CD4-positive, alpha-beta T cell (primary cell): ENCODE measurements at regions of chr20 and their contacts with region 1.

Region 1: DNA sequence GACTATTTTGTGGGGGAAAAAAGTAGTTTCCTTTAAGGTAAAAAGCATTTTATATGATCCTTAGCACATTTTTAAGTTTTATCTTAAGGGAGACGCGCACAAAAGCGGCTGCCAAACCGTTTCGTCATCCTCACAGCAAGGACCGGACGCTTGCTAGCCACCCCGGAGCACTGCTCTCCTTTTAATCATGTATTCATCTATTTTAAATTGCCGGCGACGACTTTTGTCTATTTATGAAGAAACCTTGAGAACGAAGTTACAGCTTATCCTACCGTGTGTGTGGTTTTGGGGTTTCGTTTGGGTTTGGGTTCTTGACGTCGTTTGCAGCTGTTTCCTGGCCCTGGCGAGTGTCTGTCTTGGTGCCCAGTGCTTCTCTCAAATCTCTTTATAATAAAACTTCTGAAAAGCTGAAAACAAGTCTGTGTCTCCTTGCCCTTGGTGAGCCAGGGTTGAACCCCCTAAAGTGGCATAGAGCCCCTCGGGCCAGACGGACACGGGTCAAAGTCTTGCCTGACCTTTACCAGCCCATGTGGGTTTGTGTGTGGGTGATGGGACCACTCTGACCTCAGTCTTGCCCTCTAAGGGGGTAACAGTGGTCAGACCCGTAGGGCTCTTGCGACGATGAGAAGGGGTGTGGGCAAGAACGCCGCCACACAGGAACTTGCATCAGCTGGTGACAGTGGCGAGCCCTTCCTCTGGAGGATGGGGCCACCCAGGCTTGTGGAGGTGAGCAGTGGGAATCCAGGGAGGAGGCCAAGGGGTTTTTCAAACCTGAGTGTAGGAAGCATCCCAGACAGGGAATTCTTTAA is 117.6 kb downstream of the JPH2 start:
- DNase-seq: peak; percentile 60 to 93 (median 70)
- ATAC-seq: peak; percentile 62
- H3K4me3 ChIP-seq: peak overlapping the region; percentile 52
- H3K4me3 Mint-ChIP-seq: peak overlapping the region; percentile 85
- H3K27ac ChIP-seq: peak overlapping the region; percentile 84 to 97
- H3K27ac Mint-ChIP-seq: peak overlapping the region; percentile 97
- H3K4me1 ChIP-seq: peaks cover 80% of the 10 kb centered on the region
- H3K4me1 Mint-ChIP-seq: peaks cover 75% of the 10 kb centered on the region
- H3K27me3 ChIP-seq: no peaks in the 10 kb centered on the region
- H3K27me3 Mint-ChIP-seq: no peaks in the 10 kb centered on the region
- CTCF ChIP-seq: no peak

Region 2: GRCh38 chr20:43840382-43841070 is 228.9 kb before region 1 on chr20:
- CTCF ChIA-PET with region 1: no interaction called
- POLR2A ChIA-PET with region 1: no interaction called
- intact Hi-C with region 1: loop called in 1 of 2 experiments (anchors 10 kb)
- DNase-seq: peak in 11 of 14 experiments; percentile 7 to 57 (median 23)
- ATAC-seq: peak; percentile 64
- H3K4me3 ChIP-seq: no peak overlapping the region
- H3K4me3 Mint-ChIP-seq: no peak overlapping the region
- H3K27ac ChIP-seq: no peak overlapping the region
- H3K27ac Mint-ChIP-seq: no peak overlapping the region
- H3K4me1 ChIP-seq: peaks cover 17% of the 10 kb centered on the region
- H3K4me1 Mint-ChIP-seq: peaks cover 13% of the 10 kb centered on the region
- H3K27me3 ChIP-seq: no peaks in the 10 kb centered on the region
- H3K27me3 Mint-ChIP-seq: no peaks in the 10 kb centered on the region
- CTCF ChIP-seq: no peak

Region 3: GRCh38 chr20:43949741-43950618 is 119.4 kb before region 1 on chr20:
- CTCF ChIA-PET with region 1: no interaction called
- POLR2A ChIA-PET with region 1: interaction called, 5 read pairs
- intact Hi-C with region 1: loop called in 1 of 2 experiments (anchors 5 kb)
- DNase-seq: peak; percentile 49 to 87 (median 65)
- ATAC-seq: peak; percentile 85
- H3K4me3 ChIP-seq: peak overlapping the region; percentile 1
- H3K4me3 Mint-ChIP-seq: peak overlapping the region; percentile 69
- H3K27ac ChIP-seq: no peak overlapping the region
- H3K27ac Mint-ChIP-seq: peak overlapping the region; percentile 16
- H3K4me1 ChIP-seq: peaks cover 93% of the 10 kb centered on the region
- H3K4me1 Mint-ChIP-seq: peaks cover 87% of the 10 kb centered on the region
- H3K27me3 ChIP-seq: no peaks in the 10 kb centered on the region
- H3K27me3 Mint-ChIP-seq: no peaks in the 10 kb centered on the region
- CTCF ChIP-seq: no peak

Region 4: GRCh38 chr20:43963872-43964791 is 105.3 kb before region 1 on chr20:
- CTCF ChIA-PET with region 1: interaction called, 3 read pairs
- POLR2A ChIA-PET with region 1: interaction called, 10 read pairs
- intact Hi-C with region 1: loop called (anchors 1 to 5 kb)
- DNase-seq: peak; percentile 25 to 83 (median 51)
- ATAC-seq: peak; percentile 90
- H3K4me3 ChIP-seq: no peak overlapping the region
- H3K4me3 Mint-ChIP-seq: peak overlapping the region; percentile 45
- H3K27ac ChIP-seq: no peak overlapping the region
- H3K27ac Mint-ChIP-seq: no peak overlapping the region
- H3K4me1 ChIP-seq: peaks cover 66% of the 10 kb centered on the region
- H3K4me1 Mint-ChIP-seq: peaks cover 37% of the 10 kb centered on the region
- H3K27me3 ChIP-seq: no peaks in the 10 kb centered on the region
- H3K27me3 Mint-ChIP-seq: no peaks in the 10 kb centered on the region
- CTCF ChIP-seq: no peak

Region 5: GRCh38 chr20:44056010-44056698 is 13.3 kb before region 1 on chr20:
- CTCF ChIA-PET with region 1: interaction called, 10 read pairs
- POLR2A ChIA-PET with region 1: interaction called, 27 read pairs
- intact Hi-C with region 1: loop called in 1 of 2 experiments (anchors 1 kb)
- DNase-seq: peak; percentile 53 to 83 (median 65)
- ATAC-seq: peak; percentile 97
- H3K4me3 ChIP-seq: no peak overlapping the region
- H3K4me3 Mint-ChIP-seq: no peak overlapping the region
- H3K27ac ChIP-seq: no peak overlapping the region
- H3K27ac Mint-ChIP-seq: peak overlapping the region; percentile 15
- H3K4me1 ChIP-seq: peaks cover 12% of the 10 kb centered on the region
- H3K4me1 Mint-ChIP-seq: peaks cover 38% of the 10 kb centered on the region
- H3K27me3 ChIP-seq: no peaks in the 10 kb centered on the region
- H3K27me3 Mint-ChIP-seq: no peaks in the 10 kb centered on the region
- CTCF ChIP-seq: peak; percentile 71

Region 6: DNA sequence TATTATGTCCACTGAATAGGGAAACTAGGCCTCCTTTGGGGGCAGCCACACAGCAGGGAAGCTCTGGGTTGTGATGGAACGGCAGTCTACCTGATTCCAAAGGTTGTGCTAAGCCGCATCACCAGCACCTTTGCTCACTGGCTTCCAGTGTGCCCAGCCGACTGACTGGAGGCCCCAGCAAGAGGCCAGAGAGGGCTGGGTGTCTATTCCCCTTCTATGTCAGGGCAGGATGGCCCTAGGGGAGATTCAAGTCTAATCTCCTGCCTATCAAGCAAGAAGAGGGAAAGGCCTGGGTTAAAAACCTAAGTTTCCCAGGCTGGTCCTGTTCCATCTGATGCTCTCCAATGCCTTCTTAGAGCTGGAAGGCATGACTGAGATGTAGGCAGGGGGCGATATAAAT is 64.0 kb after region 1 on chr20:
- CTCF ChIA-PET with region 1: no interaction called
- POLR2A ChIA-PET with region 1: no interaction called
- intact Hi-C with region 1: loop called in 1 of 2 experiments (anchors 1 kb)
- DNase-seq: no peak
- ATAC-seq: no peak
- H3K4me3 ChIP-seq: no peak overlapping the region
- H3K4me3 Mint-ChIP-seq: no peak overlapping the region
- H3K27ac ChIP-seq: no peak overlapping the region
- H3K27ac Mint-ChIP-seq: no peak overlapping the region
- H3K4me1 ChIP-seq: no peaks in the 10 kb centered on the region
- H3K4me1 Mint-ChIP-seq: no peaks in the 10 kb centered on the region
- H3K27me3 ChIP-seq: peaks cover 4% of the 10 kb centered on the region in 2 experiments
- H3K27me3 Mint-ChIP-seq: peaks cover 16% of the 10 kb centered on the region
- CTCF ChIP-seq: no peak